ENCODE measurements at regions of chr3 and their contacts with region 1.

Region 1: DNA sequence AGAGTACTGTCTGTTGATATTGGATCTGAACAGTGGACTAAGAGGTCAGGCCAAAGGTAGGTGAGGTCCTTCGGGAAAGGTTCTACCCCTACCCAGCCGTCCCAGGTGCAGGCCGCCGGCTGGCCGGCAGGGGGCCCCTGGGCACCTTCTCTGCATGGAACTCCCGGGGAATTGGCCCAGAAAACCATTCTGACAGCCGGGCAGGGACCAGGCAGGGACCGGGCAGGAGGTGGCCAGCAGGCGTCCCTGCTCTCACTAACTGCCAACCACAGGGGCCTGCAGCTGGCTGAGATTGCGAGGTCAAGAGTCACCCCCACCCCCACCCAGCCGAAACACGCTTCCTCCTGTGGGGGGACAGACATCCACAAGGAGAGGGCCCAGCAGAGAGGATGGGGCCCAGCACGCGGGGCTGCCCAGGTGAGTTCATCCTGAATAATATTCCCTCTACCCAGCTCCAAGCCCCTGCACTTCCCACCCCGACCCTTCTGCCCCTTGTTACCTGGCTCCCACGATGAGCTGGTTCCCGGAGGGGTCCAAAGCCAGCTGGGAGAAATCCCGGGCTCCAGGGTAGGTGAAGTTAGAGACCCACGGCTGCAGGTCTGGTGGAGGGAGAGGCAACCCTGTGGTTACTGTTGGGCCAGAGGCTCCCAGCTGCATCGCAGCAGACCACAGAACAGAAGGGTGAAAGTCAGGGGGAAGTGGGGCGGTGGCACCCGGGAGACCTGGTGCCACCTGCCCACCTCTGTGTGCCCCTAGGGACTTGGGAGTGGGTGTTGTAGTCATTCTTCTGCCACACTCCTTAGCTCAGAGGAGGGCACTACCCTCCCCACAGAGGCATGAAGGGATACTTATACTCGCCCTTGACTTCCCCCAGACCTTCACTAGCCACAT is 84.4 kb downstream of the SEMA5B start:
- DNase-seq: no peak
- H3K4me3 ChIP-seq: no peak overlapping the region
- H3K27me3 ChIP-seq: peaks cover 28% of the 10 kb centered on the region
- CTCF ChIP-seq: peak; percentile 97

Region 2: GRCh38 chr3:122403489-122403888 is 539.7 kb before region 1 on chr3:
- CTCF ChIA-PET with region 1: no interaction called
- POLR2A ChIA-PET with region 1: no interaction called
- DNase-seq: no peak
- H3K4me3 ChIP-seq: no peak overlapping the region
- H3K27me3 ChIP-seq: no peaks in the 10 kb centered on the region
- CTCF ChIP-seq: no peak

Region 3: GRCh38 chr3:122957707-122958689 is 14.8 kb after region 1 on chr3:
- CTCF ChIA-PET with region 1: interaction called, 21 read pairs
- POLR2A ChIA-PET with region 1: no interaction called
- DNase-seq: no peak
- H3K4me3 ChIP-seq: no peak overlapping the region
- H3K27me3 ChIP-seq: peaks cover 45% of the 10 kb centered on the region
- CTCF ChIP-seq: no peak

Region 4: DNA sequence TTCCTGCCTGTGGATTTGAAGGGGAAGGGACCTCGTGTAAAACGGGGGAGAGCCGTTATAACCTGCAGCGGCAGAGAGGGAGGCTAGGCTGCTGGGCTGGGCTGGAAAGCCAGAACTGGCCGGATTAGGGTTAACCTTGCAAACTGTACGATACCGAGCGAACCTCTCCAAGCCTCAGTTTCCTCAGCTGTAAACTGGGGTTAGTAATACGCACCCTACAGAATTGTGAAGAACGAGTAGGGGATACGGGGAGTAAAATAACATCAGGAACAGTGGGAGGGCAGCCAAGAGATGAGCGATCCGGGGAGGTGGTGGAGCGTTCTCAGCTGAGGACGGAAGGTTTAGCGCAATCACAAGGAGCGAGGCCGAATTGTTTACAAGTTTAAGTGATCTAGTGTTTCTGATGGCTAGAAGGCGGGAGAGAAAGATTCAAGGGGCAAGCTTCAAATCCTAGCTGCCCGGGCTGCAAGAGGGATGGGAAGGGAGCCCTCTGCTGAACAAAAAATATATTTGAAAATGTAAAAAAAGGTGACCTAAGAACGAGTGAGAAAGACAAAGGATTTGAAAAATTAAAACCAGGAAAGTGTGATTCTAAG is 85.1 kb after region 1 on chr3:
- CTCF ChIA-PET with region 1: interaction called, 46 read pairs
- POLR2A ChIA-PET with region 1: no interaction called
- DNase-seq: no peak
- H3K4me3 ChIP-seq: peak overlapping the region; percentile 34
- H3K27me3 ChIP-seq: peaks cover 69% of the 10 kb centered on the region
- CTCF ChIP-seq: peak; percentile 61

Region 5: DNA sequence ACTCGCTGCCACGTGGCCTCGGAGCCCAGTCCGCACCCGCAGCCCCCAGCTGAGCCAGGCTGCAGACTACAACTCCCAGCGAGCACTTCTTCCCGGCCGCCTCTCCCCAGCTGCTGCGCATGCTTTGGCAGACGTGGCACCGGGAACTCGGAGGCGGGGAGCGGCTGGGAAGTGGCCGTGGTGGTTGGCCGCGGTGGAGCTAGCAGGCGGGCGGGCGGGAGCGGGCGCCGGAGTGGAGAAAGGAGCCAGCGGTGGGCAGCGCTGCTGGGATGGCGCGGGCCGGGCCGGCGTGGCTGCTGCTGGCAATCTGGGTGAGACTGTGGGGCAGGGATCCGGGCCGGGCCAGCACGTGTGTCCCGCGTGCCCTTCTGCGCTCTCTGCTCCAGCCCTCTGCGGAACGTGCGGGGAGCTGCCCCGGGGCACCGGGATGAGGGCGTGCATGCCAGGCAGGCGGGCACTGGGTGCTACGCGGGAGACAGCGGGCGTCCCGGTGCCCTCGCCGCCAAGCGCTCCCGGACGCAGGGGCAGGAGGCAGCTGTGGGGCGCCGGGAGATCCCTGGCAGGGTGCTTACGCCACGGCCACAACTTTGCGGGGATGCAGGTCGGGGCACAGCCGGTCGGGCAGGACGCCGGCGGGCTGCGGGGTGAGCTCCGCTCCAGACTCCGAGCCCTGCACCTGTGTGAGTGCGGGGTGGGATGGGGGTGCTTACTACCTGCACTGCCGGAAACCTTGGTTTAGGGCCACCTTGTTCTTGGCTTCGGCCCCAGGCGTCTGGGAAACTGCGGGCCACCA is 123.9 kb after region 1 on chr3 and contains the start of gene PDIA5:
- CTCF ChIA-PET with region 1: no interaction called
- POLR2A ChIA-PET with region 1: no interaction called
- DNase-seq: peak; percentile 39
- H3K4me3 ChIP-seq: peak within 1 kb of the TSS; percentile 90
- H3K27me3 ChIP-seq: peaks cover 2% of the 10 kb centered on the region
- CTCF ChIP-seq: no peak
- polyA plus RNA-seq, gene PDIA5: 47.3 and 53.5 TPM in 2 replicates

Measured in BJ (cell line).